ENCODE measurements at regions of chr6 and their contacts with region 1.

Region 1: DNA sequence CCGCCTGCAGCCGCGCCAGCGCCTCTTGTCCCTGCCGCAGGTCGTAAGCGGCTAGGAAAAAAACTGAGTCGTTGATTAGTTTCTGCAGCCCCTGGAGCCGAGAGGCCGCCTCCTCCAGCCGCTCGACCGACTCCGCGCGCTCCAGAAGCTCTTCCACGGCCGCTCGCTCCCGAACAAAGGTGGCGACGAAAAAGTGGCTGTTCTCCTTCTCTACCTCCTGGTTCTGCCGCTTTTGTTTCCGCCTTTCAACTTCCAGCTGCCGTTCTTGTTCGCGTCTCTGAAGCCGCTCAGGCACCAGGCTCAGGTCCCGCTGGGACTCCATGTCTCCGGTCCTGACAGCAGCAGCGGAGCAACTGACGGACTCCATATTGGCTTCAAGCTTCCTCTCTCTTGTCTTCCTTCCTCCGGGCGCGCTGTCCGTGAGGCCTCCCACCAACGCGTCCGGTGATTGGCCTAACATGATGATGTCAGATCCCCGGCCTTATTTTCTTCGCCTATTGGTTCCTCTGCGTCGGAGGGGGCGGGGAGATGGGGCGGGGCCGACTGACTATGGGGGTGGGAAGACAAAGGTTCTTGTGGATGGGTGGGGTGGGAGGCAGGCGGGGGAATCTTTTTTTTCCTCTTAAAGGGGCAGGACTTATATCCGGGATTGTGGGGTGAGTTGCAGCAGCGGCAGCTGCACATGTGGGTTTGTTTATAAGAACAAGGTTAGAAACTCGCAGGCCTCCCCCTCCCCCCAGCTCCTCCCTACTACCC is at the start of gene TBCC:
- DNase-seq: peak; percentile 91 to 94
- H3K4me3 ChIP-seq: peak within 1 kb of the TSS; percentile 78
- H3K27ac ChIP-seq: peak within 1 kb of the TSS; percentile 70
- H3K4me1 ChIP-seq: peaks cover 19% of the 10 kb centered on the region
- H3K27me3 ChIP-seq: no peaks in the 10 kb centered on the region
- CTCF ChIP-seq: no peak
- total RNA-seq, gene TBCC: 12.3 and 15.1 TPM in 2 replicates

Region 2: DNA sequence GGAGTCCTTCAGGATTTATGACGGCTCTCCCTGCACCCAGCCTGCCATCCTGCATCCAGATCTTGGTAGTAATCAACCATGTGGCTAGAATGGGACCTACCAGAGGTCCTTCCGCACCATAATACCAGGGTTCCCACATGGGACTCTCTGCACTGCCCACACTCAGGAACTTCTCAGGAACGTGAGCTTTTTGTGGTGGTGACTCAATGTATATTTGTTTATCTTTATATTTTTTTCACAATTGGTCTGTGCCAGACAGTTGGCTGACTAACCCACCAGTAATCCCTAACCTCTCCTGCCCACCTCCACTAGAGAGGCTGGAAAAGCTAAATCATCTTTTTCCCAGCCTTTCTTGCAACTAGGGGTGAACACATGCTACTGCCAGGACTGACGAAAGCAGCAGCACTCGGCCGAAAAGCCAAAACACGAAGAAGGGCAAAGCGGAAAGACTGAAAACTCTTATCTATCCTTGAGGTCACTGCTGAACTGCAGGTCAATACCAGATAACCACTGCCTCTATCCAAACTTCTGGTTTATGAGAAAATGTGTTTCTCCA is 407.1 kb before region 1 on chr6:
- CTCF ChIA-PET with region 1: no interaction called
- POLR2A ChIA-PET with region 1: interaction called, 11 read pairs
- intact Hi-C with region 1: no loop called
- DNase-seq: peak; percentile 70 to 97
- H3K4me3 ChIP-seq: peak overlapping the region; percentile 15; the same call in 1 of the 2 replicates
- H3K27ac ChIP-seq: peak overlapping the region; percentile 93
- H3K4me1 ChIP-seq: peaks cover 39% of the 10 kb centered on the region
- H3K27me3 ChIP-seq: no peaks in the 10 kb centered on the region
- CTCF ChIP-seq: no peak

Region 3: DNA sequence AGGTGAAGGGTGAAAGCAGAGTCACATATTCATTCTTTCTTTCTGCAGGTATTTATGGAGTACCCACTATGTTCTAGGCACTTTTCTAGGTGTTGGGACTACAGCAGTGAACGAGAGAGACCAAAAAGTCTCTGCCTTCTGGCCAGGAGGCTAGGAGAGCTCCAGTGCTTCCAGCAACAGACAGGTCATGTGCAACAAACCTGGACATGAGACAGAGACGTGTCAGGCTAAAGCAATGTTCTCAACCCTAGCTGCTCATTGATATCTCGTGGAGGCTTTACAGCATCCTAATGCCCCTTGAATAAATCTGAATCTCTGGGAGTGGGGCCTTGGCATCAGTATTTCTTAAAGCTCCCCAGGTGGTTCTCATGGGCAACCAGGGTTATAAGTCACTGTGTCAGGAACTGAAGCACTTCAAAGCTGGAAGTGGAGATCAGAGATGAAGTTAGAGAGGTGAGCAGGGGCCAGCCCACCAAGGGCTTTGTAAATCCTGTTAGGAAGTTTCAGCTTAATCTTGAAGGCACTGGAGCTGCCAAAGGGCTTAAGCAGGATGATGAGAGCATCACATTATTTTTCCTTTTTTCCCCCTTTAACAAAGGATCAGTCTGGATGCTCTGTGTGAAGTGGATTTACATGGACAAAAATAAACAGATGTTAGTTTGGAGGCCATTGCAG is 13.0 kb after region 1 on chr6:
- CTCF ChIA-PET with region 1: no interaction called
- POLR2A ChIA-PET with region 1: no interaction called
- intact Hi-C with region 1: no loop called
- DNase-seq: no peak
- H3K4me3 ChIP-seq: no peak overlapping the region
- H3K27ac ChIP-seq: no peak overlapping the region
- H3K4me1 ChIP-seq: no peaks in the 10 kb centered on the region
- H3K27me3 ChIP-seq: no peaks in the 10 kb centered on the region
- CTCF ChIP-seq: no peak

Region 4: GRCh38 chr6:42782622-42783176 is 36.8 kb after region 1 on chr6:
- CTCF ChIA-PET with region 1: interaction called, 7 read pairs
- POLR2A ChIA-PET with region 1: interaction called, 50 read pairs
- intact Hi-C with region 1: loop called (anchors 1 kb)
- DNase-seq: peak; percentile 60 to 62
- H3K4me3 ChIP-seq: peak overlapping the region; percentile 99
- H3K27ac ChIP-seq: peak overlapping the region; percentile 94
- H3K4me1 ChIP-seq: peaks cover 39% of the 10 kb centered on the region
- H3K27me3 ChIP-seq: no peaks in the 10 kb centered on the region
- CTCF ChIP-seq: no peak

Region 5: DNA sequence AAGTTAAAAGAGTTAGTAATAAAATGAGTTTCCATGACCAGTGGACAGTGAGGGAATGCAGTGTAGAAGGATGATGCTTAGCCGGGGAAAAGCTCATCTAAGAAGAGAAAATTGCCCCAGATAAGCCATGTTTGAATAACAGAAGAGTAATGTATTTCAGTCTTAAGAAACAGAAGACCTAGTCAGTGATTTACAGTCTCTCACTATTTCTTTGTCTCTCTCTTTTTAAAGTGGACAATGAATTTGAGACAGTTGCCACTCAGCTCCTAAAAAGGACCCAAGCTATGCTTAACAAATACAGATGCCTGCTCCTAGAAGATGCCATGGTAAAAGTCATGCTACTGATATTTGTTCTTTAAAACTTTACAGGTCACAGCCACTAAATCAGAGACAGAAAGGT is 114.1 kb after region 1 on chr6:
- CTCF ChIA-PET with region 1: no interaction called
- POLR2A ChIA-PET with region 1: interaction called, 11 read pairs
- intact Hi-C with region 1: no loop called
- DNase-seq: no peak
- H3K4me3 ChIP-seq: no peak overlapping the region
- H3K27ac ChIP-seq: no peak overlapping the region
- H3K4me1 ChIP-seq: no peaks in the 10 kb centered on the region
- H3K27me3 ChIP-seq: no peaks in the 10 kb centered on the region
- CTCF ChIP-seq: no peak

Region 6: GRCh38 chr6:43013843-43014433 is 268.1 kb after region 1 on chr6 and contains the starts of genes KLHDC3 and MEA1:
- CTCF ChIA-PET with region 1: no interaction called
- POLR2A ChIA-PET with region 1: no interaction called
- intact Hi-C with region 1: no loop called
- DNase-seq: peak; percentile 99
- H3K4me3 ChIP-seq: peak within 1 kb of the TSS; percentile 67
- H3K27ac ChIP-seq: peak within 1 kb of the TSS; percentile 18; the same call in 1 of the 2 replicates
- H3K4me1 ChIP-seq: peaks cover 18% of the 10 kb centered on the region
- H3K27me3 ChIP-seq: no peaks in the 10 kb centered on the region
- CTCF ChIP-seq: no peak
- total RNA-seq, gene KLHDC3: 104 and 122 TPM in 2 replicates
- total RNA-seq, gene MEA1: 77.0 and 77.6 TPM in 2 replicates

Region 7: GRCh38 chr6:43070028-43070632 is 324.2 kb after region 1 on chr6:
- CTCF ChIA-PET with region 1: no interaction called
- POLR2A ChIA-PET with region 1: no interaction called
- intact Hi-C with region 1: no loop called
- DNase-seq: peak; percentile 23 to 48
- H3K4me3 ChIP-seq: no peak overlapping the region
- H3K27ac ChIP-seq: no peak overlapping the region
- H3K4me1 ChIP-seq: no peaks in the 10 kb centered on the region
- H3K27me3 ChIP-seq: no peaks in the 10 kb centered on the region
- CTCF ChIP-seq: peak; percentile 81